AG04449 (cell line): ENCODE measurements at regions of chr15 and their contacts with region 1.

Region 1: DNA sequence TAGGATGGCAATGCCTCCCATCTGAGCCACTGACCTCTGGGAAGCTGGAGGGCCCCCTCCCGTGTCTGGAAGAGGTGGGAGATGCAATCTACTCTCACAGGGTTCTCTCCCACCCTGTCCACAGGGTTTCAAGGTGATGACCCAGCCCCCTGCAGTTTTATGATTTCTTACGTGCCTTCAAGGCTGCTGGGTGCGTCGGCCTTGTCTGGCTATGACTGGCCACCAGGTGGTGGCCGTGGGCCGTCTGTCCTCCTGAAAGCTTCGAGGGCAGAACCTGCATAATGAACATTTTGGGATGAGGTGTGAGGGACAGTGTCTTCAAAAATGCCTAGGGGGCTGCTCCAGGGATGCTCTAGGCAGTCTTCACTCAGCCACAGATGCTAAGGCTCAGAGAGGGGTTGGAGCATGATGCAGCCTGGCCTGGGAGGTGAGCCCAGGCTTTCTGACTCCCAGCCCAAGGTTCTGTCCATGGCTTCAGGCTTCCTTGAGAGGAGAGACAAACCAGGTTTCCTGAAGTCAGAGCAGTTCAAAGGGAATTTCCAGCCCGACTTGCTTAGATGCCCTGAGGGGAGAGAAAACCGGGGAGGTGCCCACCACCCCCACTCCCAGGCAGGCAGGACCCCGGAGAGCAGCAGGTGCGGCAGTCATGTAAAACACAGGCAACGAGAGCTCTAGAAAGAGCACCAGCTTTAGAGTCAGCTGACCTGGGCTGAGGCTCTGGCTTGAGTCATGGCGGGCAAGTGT is 18.7 kb downstream of the ISG20 start:
- DNase-seq: no peak
- H3K4me3 ChIP-seq: no peak overlapping the region
- CTCF ChIP-seq: peak; percentile 86

Region 2: GRCh38 chr15:88401996-88402656 is 255.4 kb before region 1 on chr15:
- CTCF ChIA-PET with region 1: no interaction called
- POLR2A ChIA-PET with region 1: no interaction called
- DNase-seq: no peak
- H3K4me3 ChIP-seq: no peak overlapping the region
- CTCF ChIP-seq: no peak

Region 3: GRCh38 chr15:88834211-88834812 is 176.8 kb after region 1 on chr15:
- CTCF ChIA-PET with region 1: interaction called, 385 read pairs
- POLR2A ChIA-PET with region 1: no interaction called
- DNase-seq: peak; percentile 12
- H3K4me3 ChIP-seq: no peak overlapping the region
- CTCF ChIP-seq: peak; percentile 82

Region 4: DNA sequence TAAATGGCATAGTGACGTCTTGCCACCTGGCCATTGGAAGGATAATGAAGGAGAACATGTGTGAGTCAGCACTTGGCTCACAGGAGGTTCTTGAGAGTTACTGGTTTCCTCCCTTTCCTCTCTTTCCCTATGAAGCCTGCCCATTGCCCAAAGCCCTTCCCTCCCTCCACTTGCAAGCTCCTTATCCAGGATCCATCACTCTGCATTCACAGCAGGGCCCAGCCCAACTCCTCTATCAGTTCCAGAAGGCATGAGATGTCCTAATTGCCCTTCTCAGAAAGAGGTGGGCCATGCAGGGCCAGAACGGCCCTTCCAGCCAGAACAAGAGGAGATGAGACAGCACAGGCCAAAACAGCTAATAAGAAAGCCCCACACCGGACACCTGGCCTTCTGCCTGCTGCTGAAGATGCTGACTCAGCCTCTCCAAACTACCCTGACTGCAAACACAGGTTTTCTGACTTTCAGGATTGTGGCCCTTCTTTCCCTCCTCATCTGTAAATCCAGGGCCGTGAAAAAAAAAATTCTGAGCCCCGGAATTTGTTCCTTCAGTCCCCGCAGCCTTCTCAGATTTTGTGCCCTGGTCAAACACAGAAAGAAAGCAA is 208.1 kb after region 1 on chr15:
- CTCF ChIA-PET with region 1: interaction called, 10 read pairs
- POLR2A ChIA-PET with region 1: no interaction called
- DNase-seq: no peak
- H3K4me3 ChIP-seq: no peak overlapping the region
- CTCF ChIP-seq: no peak

Region 5: GRCh38 chr15:88890495-88890894 is 233.0 kb after region 1 on chr15:
- CTCF ChIA-PET with region 1: interaction called, 22 read pairs
- POLR2A ChIA-PET with region 1: interaction called, 3 read pairs
- DNase-seq: no peak
- H3K4me3 ChIP-seq: no peak overlapping the region
- CTCF ChIP-seq: no peak

Region 6: DNA sequence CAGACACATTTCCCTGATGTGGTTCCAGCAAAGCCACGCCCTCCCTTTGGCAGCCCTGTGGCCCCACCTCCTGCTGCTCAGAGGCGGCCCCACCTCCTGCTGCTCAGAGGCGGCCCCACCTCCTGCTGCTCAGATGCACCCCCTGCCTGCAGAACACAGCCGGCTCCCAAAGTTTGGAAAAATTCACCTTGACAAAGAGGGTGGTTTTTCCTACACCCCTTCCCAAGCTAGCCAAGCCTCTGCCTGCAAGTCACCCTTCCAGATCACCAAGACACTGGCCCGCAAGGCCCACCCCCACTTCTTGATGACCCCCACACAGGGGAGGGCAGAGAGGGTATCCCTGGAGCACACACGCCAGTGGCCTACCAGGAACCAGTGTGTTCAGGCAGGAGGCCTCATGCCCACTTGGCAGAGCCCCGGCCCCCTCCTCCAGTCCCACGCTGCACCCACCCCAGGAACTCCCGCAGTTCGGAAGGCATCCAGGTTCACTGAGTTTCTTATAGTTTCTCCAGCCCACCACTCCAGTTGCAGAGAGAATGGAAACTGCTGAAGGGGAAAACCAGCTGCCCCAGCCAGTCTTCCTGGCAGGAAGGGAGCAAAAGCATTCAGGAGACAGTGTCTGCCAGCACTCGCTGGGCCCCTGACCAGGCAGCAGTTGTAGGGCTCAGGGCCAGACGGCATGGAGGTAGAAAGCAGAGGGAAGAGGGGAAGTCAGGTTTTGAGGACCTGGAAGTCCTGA is 240.1 kb after region 1 on chr15:
- CTCF ChIA-PET with region 1: interaction called, 37 read pairs
- POLR2A ChIA-PET with region 1: interaction called, 3 read pairs
- DNase-seq: no peak
- H3K4me3 ChIP-seq: no peak overlapping the region
- CTCF ChIP-seq: peak; percentile 65